AG04449 (cell line): ENCODE measurements at regions of chr2 and their contacts with region 1.

Region 1: DNA sequence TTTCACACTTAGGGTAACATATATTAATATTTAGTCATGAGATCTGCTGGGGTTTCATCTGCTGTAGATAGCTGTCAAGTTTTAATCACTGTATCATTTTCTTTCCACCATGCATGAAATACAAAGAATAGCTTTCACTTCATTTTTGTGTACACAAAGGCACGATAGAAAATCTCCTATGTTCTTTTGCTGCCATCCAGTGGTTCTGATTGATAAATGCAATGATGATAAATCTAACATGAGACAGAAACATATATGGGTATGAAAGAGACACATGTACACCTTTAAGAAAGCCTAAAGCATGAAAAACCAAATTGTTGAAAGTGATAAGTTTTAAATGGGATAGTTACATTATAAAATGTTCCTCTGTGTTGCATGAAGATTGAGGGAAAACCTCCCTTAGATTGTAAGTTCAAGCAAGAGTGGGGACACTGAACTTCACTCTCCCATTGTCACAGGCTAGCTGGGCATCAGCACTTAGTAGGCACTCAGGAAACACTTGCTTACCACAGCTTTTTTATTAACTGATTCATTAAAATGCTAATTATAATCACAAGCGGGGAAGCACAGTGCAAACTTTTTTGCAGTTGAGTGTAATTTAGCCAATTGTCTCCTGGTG is 31.2 kb downstream of the C1D start:
- DNase-seq: no peak
- H3K4me3 ChIP-seq: no peak overlapping the region
- CTCF ChIP-seq: peak; percentile 42

Region 2: DNA sequence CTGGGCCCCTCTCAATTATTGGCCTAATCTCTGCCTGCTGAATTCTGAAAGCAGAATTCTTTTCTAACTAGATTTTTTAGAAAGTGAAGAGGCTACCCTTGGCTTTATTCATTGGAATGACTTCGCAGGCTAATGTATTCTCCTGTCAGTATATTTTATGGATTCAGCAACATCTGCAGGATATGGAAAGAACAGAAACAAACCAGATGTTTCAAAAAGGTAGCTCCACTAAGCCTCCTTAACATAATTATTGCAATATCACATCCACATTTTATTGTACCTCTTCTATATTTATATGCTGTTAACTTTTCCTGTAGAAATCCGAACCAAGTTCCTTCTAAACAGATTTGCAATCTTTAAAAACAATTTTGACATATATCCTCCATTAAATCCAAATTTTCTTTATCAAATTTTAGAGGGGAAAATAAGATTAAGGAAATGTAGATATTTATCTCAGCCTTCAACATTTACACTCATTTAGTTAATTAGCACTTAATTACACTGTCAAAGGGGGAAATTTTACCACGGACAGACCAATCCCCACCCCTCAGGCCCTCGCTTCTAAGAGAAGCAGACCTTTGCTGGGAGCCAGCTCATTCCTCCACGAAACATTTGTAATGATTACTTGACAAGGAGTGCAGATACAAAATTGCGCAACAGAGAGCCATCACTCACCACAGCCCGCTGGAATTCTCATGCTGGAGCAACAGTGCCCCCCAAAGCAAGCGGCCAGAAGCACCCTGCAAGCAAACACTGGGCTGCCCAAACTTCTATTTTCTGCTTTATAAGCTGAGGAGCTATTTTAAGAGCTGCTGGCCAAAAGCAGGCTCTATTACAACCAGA is 381.1 kb before region 1 on chr2:
- CTCF ChIA-PET with region 1: interaction called, 50 read pairs
- POLR2A ChIA-PET with region 1: no interaction called
- DNase-seq: peak; percentile 92
- H3K4me3 ChIP-seq: no peak overlapping the region
- CTCF ChIP-seq: peak; percentile 89

Region 3: GRCh38 chr2:67840460-67841068 is 191.1 kb before region 1 on chr2:
- CTCF ChIA-PET with region 1: interaction called, 44 read pairs
- POLR2A ChIA-PET with region 1: no interaction called
- DNase-seq: no peak
- H3K4me3 ChIP-seq: no peak overlapping the region
- CTCF ChIP-seq: peak; percentile 90

Region 4: DNA sequence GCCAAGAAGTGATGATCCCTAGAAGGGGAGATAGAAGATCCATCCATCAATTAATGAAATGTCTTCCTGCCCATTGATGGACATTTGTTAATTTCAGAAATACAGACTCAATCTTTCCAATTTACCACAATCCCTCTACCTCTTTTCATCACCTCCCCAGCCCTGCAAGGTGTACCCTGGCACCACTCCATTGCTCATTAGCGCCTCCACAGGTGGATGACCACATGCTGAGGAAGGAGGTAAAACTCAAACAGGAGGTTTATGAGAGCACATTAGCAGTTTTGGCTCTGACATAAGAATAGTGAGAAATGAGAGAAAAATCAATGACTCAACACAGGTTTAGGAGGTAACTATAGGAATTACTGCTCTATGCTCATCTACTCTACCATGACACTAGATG is 176.9 kb before region 1 on chr2:
- CTCF ChIA-PET with region 1: interaction called, 16 read pairs
- POLR2A ChIA-PET with region 1: no interaction called
- DNase-seq: no peak
- H3K4me3 ChIP-seq: no peak overlapping the region
- CTCF ChIP-seq: no peak

Region 5: GRCh38 chr2:67880291-67880761 is 151.3 kb before region 1 on chr2:
- CTCF ChIA-PET with region 1: interaction called, 10 read pairs
- POLR2A ChIA-PET with region 1: no interaction called
- DNase-seq: no peak
- H3K4me3 ChIP-seq: no peak overlapping the region
- CTCF ChIP-seq: no peak

Region 6: GRCh38 chr2:68185541-68186164 is 154.0 kb after region 1 on chr2:
- CTCF ChIA-PET with region 1: no interaction called
- POLR2A ChIA-PET with region 1: no interaction called
- DNase-seq: no peak
- H3K4me3 ChIP-seq: no peak overlapping the region
- CTCF ChIP-seq: peak; percentile 51

Region 7: DNA sequence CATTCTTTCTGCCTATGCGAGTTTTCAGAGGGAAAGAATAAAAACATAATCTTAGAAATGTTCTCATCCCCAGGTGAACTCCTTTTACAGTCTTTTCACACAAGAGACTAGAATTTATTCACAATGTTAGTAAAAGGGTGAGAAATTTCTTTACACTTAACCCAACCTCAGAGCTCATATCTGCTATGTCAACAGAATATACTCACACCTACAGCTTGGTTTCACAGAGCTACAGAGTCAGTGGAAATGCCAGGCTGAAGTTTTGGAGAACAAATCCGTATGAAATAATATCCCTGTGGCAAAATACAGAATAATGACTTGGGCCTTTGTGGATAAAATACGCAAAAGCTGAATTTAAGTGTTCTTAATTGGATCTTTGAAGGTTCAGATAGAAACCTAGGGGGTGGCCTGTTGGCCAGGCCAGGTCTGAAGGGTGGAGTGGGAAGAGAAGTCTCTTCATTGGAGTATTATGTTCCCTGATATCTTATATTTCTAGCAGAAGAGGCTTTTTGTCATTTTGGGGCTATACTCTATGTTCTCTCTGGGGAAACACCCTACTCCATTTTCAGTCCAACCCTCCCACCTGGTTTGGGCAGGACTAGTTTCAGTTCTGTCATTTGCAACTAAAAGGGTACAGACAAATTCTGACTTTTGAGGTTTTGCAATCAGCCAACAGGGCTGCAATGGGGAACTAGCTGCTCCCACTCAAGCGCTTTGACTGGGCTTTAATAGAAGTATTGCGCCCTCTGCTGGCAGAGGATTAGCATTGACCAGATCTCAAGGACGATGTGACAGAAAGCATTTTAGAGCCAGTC is 409.7 kb after region 1 on chr2:
- CTCF ChIA-PET with region 1: no interaction called
- POLR2A ChIA-PET with region 1: no interaction called
- DNase-seq: no peak
- H3K4me3 ChIP-seq: no peak overlapping the region
- CTCF ChIP-seq: peak; percentile 79